ENCODE measurements at regions of chr10 and their contacts with region 1.

Region 1: DNA sequence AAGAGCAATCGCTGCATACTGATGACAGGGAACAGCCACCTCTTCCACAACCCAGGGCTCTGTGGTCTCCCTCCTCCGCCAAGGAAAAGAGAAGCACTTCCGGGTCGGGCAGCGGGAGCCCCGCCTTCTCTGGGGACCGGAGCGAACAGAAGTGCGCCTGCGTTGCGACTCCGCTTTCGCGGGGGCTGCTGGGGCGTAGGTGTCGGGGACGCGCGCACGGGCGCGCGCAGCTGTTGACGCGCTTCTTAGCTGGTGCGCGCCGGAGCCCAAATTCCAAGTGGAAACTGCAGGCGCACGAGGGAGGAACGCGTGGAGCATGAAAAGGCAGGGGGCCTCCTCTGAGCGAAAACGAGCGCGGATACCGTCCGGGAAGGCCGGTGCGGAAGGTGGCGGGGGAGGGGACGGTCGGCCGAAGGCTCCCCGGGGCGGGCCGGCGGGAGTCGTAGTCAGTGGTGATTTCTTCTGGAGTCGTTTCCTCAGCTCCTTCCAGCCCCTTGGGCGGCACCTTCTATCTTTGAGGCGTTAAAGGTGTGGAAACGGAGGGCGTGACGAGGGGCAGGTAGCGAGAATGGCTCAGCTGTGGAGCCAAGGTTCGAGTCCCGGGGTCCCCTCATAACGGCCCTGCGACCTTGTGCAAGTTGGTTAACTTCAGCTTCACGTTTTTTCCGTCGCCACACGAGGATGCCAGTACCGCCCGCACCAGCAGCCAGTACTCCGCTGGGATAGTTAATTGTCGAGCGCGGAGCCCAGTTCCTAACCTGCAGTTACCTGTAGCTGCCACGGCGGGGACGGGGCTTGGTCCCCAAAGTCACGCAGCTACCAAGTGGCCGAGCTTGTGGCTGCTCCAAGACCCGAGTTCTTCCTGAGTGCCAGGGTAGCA is at the starts of genes COX15 and CUTC:
- DNase-seq: peak; percentile 96
- H3K4me3 ChIP-seq: peak within 1 kb of the TSS; percentile 75 to 89
- H3K27ac ChIP-seq: peak within 1 kb of the TSS; percentile 94 to 97
- H3K4me1 ChIP-seq: no peaks in the 10 kb centered on the region
- H3K27me3 ChIP-seq: no peaks in the 10 kb centered on the region
- CTCF ChIP-seq: peak in 3 of 4 experiments; percentile 4 to 50 (median 39)
- POLR2A ChIP-seq: peak; percentile 88
- total RNA-seq, gene COX15: 36.5 to 41.2 TPM
- total RNA-seq, gene CUTC: 18.4 to 27.3 TPM

Region 2: GRCh38 chr10:99788598-99789256 is 56.5 kb after region 1 on chr10:
- intact Hi-C with region 1: loop called (anchors 10 kb)
- DNase-seq: no peak
- H3K4me3 ChIP-seq: no peak overlapping the region
- H3K27ac ChIP-seq: no peak overlapping the region
- H3K4me1 ChIP-seq: no peaks in the 10 kb centered on the region
- H3K27me3 ChIP-seq: no peaks in the 10 kb centered on the region
- CTCF ChIP-seq: no peak
- POLR2A ChIP-seq: no peak

Measured in prostate gland (tissue), 2 donors.